ENCODE measurements at regions of chr6 and their contacts with region 1.

Region 1: DNA sequence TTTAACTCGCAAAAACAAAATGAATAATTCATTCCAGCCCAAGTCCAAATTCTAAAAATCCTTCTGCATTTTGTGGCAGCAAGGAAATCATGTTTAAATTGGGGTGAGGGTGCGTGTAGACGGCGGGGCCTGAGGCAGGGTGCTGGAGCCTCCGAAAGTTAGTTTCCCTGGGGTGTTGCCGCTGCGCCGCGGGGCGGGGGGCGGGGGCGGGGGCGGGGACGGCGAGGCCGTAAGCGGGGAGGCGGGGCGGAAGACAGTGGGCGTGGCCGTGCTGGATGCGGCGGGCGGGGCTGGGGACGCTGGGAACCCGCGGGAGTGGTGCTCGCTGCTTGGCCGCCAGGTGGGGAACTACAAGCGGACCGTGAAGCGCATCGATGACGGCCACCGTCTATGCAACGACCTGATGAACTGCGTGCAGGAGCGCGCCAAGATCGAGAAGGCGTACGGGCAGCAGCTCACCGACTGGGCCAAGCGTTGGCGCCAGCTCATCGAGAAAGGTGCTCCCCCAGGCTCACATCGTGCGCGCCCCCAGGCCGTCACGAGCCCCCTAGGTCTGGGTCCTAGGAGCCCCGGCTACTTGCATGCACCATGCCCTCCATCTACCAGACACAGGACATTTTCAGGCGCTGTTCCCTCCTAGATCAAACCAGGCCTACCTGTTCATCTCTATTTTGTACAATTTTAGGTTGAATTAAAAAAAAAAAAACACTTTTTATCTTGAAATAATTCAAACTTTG is 29.0 kb downstream of the SPDEF start:
- DNase-seq: peak; percentile 98
- H3K4me3 ChIP-seq: peak overlapping the region; percentile 25 to 39 (median 32)
- H3K27ac ChIP-seq: peak overlapping the region in 4 of 5 donors; percentile 18 to 68 (median 58)
- H3K4me1 ChIP-seq: peaks cover 6 to 27% (median 12%) of the 10 kb centered on the region in 4 donors
- H3K27me3 ChIP-seq: no peaks in the 10 kb centered on the region
- CTCF ChIP-seq: peak in 5 of 7 experiments; percentile 55 to 82 (median 70)
- EP300 ChIP-seq: no peak
- POLR2A ChIP-seq: no peak

Region 2: GRCh38 chr6:34425498-34426410 is 101.4 kb before region 1 on chr6 and contains the start of gene RPS10:
- intact Hi-C with region 1: no loop called
- DNase-seq: peak; percentile 94 to 98
- H3K4me3 ChIP-seq: peak within 1 kb of the TSS; percentile 63 to 97 (median 85)
- H3K27ac ChIP-seq: peak within 1 kb of the TSS; percentile 81 to 93 (median 87)
- H3K4me1 ChIP-seq: peaks cover 9 to 36% (median 26%) of the 10 kb centered on the region in 4 donors
- H3K27me3 ChIP-seq: no peaks in the 10 kb centered on the region
- CTCF ChIP-seq: no peak
- EP300 ChIP-seq: no peak
- POLR2A ChIP-seq: peak in 2 of 4 donors; percentile 29 to 50
- total RNA-seq, gene RPS10: 371 to 2,165 (median 1,796) TPM

Region 3: GRCh38 chr6:34608321-34609091 is 81.3 kb after region 1 on chr6:
- intact Hi-C with region 1: loop called (anchors 5 kb)
- DNase-seq: no peak
- H3K4me3 ChIP-seq: no peak overlapping the region
- H3K27ac ChIP-seq: peak overlapping the region in 2 of 5 donors; percentile 39 to 58
- H3K4me1 ChIP-seq: peaks cover 0 to 46% (median 22%) of the 10 kb centered on the region in 4 donors
- H3K27me3 ChIP-seq: no peaks in the 10 kb centered on the region
- CTCF ChIP-seq: no peak
- EP300 ChIP-seq: no peak
- POLR2A ChIP-seq: no peak

Region 4: DNA sequence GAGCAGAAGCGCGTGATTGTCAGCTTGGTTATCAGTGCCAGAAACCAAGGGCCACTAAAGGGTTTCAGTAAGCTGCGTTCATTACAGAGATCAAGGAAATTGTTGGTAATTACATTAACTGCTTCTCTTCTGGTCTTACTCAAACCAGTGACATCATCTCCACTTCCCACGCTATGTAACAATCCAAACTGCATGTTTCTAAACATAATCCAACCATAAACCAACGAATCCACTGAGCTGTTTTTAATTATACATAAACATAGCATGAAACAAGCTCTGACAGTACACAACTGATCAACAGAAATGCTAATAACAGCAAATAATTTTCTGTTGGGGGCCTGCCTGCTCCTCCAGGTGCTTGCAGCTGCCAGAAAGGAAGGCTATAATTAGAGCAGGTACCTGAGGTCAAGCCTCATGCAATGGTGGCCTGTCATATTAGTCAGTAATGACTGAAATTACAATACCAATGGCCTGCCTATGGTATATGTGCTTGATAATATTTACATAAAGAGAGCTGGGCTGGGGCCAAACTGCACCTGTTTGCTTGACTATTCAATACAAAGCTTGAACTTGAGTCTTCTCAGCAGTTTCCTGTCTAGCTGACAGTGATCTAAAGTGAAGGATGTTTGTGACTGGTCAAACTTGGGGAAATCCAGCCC is 129.3 kb after region 1 on chr6:
- intact Hi-C with region 1: no loop called
- DNase-seq: peak; percentile 73 to 78
- H3K4me3 ChIP-seq: peak overlapping the region; percentile 31 to 42 (median 34)
- H3K27ac ChIP-seq: peak overlapping the region; percentile 85 to 92 (median 89)
- H3K4me1 ChIP-seq: peaks cover 34 to 52% (median 42%) of the 10 kb centered on the region in 4 donors
- H3K27me3 ChIP-seq: no peaks in the 10 kb centered on the region
- CTCF ChIP-seq: no peak
- EP300 ChIP-seq: no peak
- POLR2A ChIP-seq: no peak

Region 5: DNA sequence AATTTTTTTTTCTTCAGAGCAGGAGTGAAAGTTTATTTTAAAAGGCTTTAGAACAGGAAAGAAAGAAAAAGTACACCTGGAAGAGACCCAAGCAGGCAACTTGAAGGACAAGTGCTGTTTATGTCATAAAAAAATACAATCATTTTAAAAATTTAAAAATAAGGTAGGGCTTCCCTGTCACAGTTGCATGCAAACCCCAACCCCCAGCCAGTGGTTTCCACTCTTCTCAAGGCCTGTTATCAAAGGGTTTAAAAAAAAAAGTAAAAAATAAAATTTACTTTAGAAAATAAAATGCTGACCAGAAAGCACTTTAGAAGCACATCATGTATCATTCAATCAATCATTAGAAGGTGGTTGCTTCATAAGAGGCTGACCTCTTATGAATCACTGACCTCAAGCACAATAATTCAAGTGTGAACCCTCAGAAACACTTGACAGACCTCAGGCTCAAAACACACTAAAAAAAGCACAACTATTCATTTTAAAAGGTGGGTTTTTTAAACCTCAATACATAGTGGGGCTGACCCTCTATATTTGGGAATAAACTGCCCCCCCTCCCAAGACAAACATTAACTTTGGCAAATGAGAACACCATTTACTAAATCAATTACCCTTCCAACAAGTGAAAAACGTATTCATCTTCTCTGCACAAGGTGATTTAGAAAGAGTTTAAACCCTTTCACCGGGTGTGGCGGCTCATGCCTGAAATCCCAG is 153.8 kb after region 1 on chr6:
- intact Hi-C with region 1: no loop called
- DNase-seq: no peak
- H3K4me3 ChIP-seq: no peak overlapping the region
- H3K27ac ChIP-seq: peak overlapping the region in 4 of 5 donors; percentile 31 to 55 (median 42)
- H3K4me1 ChIP-seq: peaks cover 5 to 40% (median 27%) of the 10 kb centered on the region in 4 donors
- H3K27me3 ChIP-seq: no peaks in the 10 kb centered on the region
- CTCF ChIP-seq: no peak
- EP300 ChIP-seq: no peak
- POLR2A ChIP-seq: no peak

Measured in stomach (tissue), 19 donors.